Heart right ventricle (tissue), 16 donors: ENCODE measurements at regions of chr18 and their contacts with region 1.

Region 1: GRCh38 chr18:72530622-72531021 is 13.5 kb downstream of the CBLN2 start:
- DNase-seq: no peak
- ATAC-seq: no peak
- H3K4me3 ChIP-seq: no peak overlapping the region
- H3K27ac ChIP-seq: no peak overlapping the region
- H3K4me1 ChIP-seq: no peaks in the 10 kb centered on the region
- H3K27me3 ChIP-seq: peaks cover 0 to 3% (median 0%) of the 10 kb centered on the region in 7 donors
- CTCF ChIP-seq: no peak

Region 2: DNA sequence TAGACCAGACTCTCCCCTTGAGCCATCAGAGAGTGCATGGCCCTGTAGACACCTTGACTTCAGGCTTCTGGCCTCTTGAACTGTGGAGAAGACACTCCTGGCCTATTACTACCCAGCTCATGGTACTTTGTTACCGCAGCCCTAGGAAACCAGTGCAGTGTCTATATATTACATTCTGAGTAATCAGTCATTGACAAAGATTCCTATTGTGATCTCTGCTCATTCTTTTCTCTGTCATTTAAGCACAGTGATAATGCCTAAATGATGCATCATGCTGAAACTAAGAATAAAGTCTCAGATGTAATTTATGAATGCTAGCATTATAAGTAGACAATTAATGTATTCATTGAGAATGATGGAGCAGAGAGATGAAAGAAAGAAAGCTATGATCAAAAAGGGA is 1638.2 kb before region 1 on chr18:
- intact Hi-C with region 1: loop called in 1 of 10 experiments (anchors 10 kb)
- DNase-seq: no peak
- ATAC-seq: no peak
- H3K4me3 ChIP-seq: no peak overlapping the region
- H3K27ac ChIP-seq: no peak overlapping the region
- H3K4me1 ChIP-seq: no peaks in the 10 kb centered on the region
- H3K27me3 ChIP-seq: no peaks in the 10 kb centered on the region
- CTCF ChIP-seq: no peak